ENCODE measurements at regions of chr17 and their contacts with region 1.

Region 1: GRCh38 chr17:78112518-78113226 is 15.9 kb downstream of the TMC6 start:
- DNase-seq: peak; percentile 69
- H3K4me3 ChIP-seq: no peak overlapping the region
- H3K27ac ChIP-seq: no peak overlapping the region
- H3K4me1 ChIP-seq: peaks cover 7 to 24% of the 10 kb centered on the region in 2 donors
- H3K27me3 ChIP-seq: no peaks in the 10 kb centered on the region
- CTCF ChIP-seq: peak; percentile 92 to 99 (median 97)
- POLR2A ChIP-seq: no peak

Region 2: GRCh38 chr17:77869665-77870132 is 243.0 kb before region 1 on chr17:
- intact Hi-C with region 1: no loop called
- DNase-seq: no peak
- H3K4me3 ChIP-seq: no peak overlapping the region
- H3K27ac ChIP-seq: no peak overlapping the region
- H3K4me1 ChIP-seq: peaks cover 7 to 11% of the 10 kb centered on the region in 2 donors
- H3K27me3 ChIP-seq: no peaks in the 10 kb centered on the region
- CTCF ChIP-seq: no peak
- POLR2A ChIP-seq: no peak

Region 3: GRCh38 chr17:78010759-78011158 is 101.9 kb before region 1 on chr17:
- intact Hi-C with region 1: no loop called
- DNase-seq: no peak
- H3K4me3 ChIP-seq: no peak overlapping the region
- H3K27ac ChIP-seq: no peak overlapping the region
- H3K4me1 ChIP-seq: no peaks in the 10 kb centered on the region
- H3K27me3 ChIP-seq: no peaks in the 10 kb centered on the region
- CTCF ChIP-seq: no peak
- POLR2A ChIP-seq: no peak

Region 4: DNA sequence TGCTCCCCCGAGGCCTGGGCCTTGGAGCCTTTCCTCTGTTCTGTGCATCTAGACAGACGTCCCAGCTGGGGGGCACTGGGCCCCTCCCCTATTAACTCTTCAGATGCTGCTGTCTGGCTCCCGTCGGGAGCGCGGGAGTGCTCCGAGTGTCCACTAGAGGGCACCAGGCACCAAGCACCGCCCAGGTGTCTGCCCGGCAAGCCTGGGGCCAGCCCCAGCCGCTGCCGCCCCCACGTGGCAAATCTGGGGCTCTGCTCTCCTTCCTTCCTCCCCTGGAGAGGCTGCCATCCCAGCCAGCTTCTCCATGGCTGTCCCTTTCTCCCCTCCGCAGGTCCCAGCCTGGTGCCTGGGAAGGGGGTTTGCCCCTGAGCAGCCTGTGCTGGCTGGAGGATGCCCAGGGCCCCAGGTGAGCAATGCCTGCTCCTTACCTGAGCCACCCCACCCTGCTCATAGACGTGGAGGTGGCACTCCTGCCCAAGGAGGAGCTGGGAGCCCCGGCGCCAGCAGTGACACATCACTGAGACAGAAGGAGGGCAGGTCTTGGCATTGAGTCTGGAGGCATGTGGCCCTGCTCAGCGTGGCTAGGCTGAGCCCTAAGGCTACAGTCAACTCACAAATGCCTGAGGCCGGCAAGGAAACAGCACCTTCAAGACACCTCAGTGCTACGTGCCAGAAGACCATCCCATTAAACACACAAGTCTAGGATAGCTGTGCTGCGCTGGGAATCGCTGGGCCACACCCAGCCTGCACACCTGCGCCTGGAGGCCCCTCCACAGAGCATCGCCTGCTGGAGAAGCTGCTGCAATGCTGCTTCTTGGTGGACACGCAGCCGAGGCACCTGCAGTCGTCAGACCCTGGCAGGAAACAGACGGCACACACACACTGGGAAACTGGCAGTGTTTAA is 138.5 kb after region 1 on chr17:
- intact Hi-C with region 1: loop called (anchors 2 kb)
- DNase-seq: peak; percentile 83 to 88
- H3K4me3 ChIP-seq: no peak overlapping the region
- H3K27ac ChIP-seq: peak overlapping the region in 1 of 3 donors; percentile 39
- H3K4me1 ChIP-seq: peaks cover 0 to 24% of the 10 kb centered on the region in 2 donors
- H3K27me3 ChIP-seq: no peaks in the 10 kb centered on the region
- CTCF ChIP-seq: peak in 5 of 6 experiments; percentile 97 to 100 (median 99)
- POLR2A ChIP-seq: no peak

Region 5: GRCh38 chr17:78289802-78290363 is 177.2 kb after region 1 on chr17:
- intact Hi-C with region 1: no loop called
- DNase-seq: peak; percentile 80 to 83
- H3K4me3 ChIP-seq: no peak overlapping the region
- H3K27ac ChIP-seq: no peak overlapping the region
- H3K4me1 ChIP-seq: no peaks in the 10 kb centered on the region
- H3K27me3 ChIP-seq: no peaks in the 10 kb centered on the region
- CTCF ChIP-seq: peak; percentile 42 to 99 (median 78)
- POLR2A ChIP-seq: no peak